OCI-LY7 (cell line): ENCODE measurements at regions of chr11 and their contacts with region 1.

Region 1: DNA sequence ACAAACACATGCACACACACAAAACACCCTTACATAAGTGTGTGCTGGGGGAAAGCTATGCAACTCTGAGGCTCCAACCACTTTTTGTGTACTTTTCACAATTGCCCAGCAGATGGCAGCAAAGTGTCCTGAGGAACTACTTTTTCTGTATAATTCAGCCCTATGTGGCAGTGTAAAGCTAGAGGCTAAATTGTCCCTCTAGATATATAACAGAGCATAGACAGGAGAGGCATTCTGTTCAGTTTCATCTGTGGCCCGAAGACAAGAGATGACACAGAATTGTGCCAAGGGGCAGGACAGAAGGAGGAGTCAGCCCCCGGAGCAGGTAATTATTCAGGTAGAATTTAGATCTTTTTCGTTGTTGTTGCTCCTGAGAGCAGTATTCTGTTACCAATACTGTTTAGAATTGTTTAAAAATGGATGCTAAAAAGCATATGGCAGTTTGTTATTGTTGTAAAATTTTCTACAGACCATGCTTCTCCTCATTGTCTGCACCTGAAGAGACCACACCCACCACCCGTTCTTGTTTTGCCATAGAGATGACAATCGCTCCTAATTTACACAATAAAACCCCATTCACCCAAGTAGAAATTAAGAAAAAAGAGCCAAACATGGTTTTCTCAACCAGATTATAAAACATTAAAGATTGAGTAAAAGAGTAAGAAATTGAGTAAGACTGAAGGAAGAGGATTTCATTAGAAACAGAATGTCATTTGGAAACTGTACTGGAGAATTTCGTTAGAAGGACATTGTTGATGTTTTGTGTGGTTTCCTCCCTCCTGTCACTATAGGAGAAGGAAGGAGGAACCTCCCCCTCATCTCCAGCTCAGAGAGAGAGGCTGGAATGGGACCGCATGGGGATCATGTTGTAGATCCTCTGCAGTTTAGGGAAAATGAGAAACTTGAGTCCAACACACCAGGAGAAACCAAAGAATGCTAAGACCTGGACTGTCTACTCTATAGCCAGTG is 14.5 kb upstream of the MS4A7 start:
- DNase-seq: peak; percentile 91
- H3K4me3 ChIP-seq: peak overlapping the region; percentile 25
- H3K27ac ChIP-seq: peak overlapping the region; percentile 43
- H3K4me1 ChIP-seq: peaks cover 51% of the 10 kb centered on the region
- CTCF ChIP-seq: peak; percentile 96

Region 2: DNA sequence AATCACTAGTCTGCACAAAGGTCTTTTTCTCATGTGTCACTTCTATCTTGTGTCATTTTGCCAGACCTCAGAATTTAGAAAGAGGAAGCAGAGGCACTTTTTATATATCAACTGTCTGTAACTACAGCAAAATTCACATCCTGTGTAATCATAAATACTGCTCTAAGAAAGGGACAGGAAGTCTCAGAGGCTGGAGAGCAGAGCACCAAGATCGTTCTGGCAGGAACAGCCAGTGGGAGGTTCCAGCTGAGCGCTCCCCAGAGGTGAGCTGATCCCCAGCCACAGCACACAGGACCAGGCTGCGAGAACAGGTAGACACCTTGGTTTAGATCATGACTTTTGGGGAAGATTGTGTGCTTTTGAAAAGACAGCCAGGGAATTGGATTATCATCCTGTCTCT is 14.5 kb after region 1 on chr11 and contains the start of gene MS4A7:
- CTCF ChIA-PET with region 1: no interaction called
- POLR2A ChIA-PET with region 1: interaction called, 15 read pairs
- intact Hi-C with region 1: no loop called
- DNase-seq: peak; percentile 89
- H3K4me3 ChIP-seq: peak within 1 kb of the TSS; percentile 52
- H3K27ac ChIP-seq: peak within 1 kb of the TSS; percentile 77
- H3K4me1 ChIP-seq: peaks cover 34% of the 10 kb centered on the region
- CTCF ChIP-seq: no peak
- total RNA-seq, gene MS4A7: 0.26 and 0.54 TPM in 2 replicates

Region 3: DNA sequence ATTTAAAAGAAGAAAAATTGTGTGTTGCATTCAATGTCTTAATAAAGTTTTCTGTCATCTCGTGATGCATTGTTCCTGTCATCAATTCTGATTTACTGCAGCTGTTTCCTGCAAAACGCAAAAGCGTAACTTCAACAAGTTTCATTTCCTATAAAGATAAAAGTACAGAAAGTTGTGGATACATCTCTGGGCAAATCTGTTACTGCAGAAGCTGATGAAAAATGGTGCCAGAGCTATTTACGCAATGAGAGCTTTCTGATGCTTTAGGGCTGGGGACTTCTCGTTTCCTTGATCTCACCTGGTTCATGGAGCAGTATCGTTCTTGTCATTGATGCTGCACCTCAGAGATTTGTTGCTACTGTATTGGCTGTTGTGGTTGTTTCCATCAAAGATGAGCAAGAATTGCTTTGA is 113.2 kb after region 1 on chr11:
- CTCF ChIA-PET with region 1: interaction called, 23 read pairs
- POLR2A ChIA-PET with region 1: interaction called, 7 read pairs
- intact Hi-C with region 1: loop called (anchors 2 kb)
- DNase-seq: peak; percentile 94
- H3K4me3 ChIP-seq: peak overlapping the region; percentile 46
- H3K27ac ChIP-seq: peak overlapping the region; percentile 95
- H3K4me1 ChIP-seq: peaks cover 59% of the 10 kb centered on the region
- CTCF ChIP-seq: no peak

Region 4: DNA sequence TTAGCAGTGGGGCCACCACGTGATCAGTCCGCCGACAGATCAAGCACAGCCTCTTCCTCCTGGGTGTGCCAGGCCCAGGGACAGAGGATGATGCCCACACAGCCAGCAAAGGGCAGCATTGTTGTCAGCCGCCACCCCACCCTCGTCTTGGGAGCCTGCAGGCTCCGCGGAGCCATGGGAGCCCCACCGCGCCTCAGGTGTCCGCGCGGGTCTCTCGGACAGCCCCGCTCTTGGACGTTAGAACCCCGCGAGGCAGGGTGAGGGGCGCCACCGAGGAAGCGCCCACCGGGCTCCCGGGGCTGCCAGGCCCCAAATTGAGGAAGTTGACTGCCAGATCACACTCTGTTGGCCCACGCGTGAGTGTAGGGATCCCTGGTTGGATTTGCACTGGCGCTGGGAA is 251.7 kb after region 1 on chr11:
- CTCF ChIA-PET with region 1: interaction called, 3 read pairs
- POLR2A ChIA-PET with region 1: no interaction called
- intact Hi-C with region 1: loop called (anchors 1 kb)
- DNase-seq: no peak
- H3K4me3 ChIP-seq: no peak overlapping the region
- H3K27ac ChIP-seq: no peak overlapping the region
- H3K4me1 ChIP-seq: peaks cover 4% of the 10 kb centered on the region
- CTCF ChIP-seq: no peak